ENCODE measurements at regions of chr1 and their contacts with region 1.

Region 1: GRCh38 chr1:58783993-58784757 is at the start of gene JUN:
- DNase-seq: peak; percentile 99
- ATAC-seq: peak; percentile 91
- total RNA-seq, gene JUN: 64.2 TPM

Region 2: GRCh38 chr1:58699011-58699762 is 85.0 kb before region 1 on chr1:
- intact Hi-C with region 1: no loop called
- DNase-seq: no peak
- ATAC-seq: peak; percentile 16

Region 3: GRCh38 chr1:58718435-58718834 is 65.7 kb before region 1 on chr1:
- intact Hi-C with region 1: no loop called
- DNase-seq: no peak
- ATAC-seq: peak; percentile 50

Region 4: GRCh38 chr1:58816072-58816746 is 32.0 kb after region 1 on chr1:
- intact Hi-C with region 1: loop called (anchors 1 kb)
- DNase-seq: peak; percentile 96
- ATAC-seq: peak; percentile 91

Region 5: GRCh38 chr1:58857680-58858673 is 73.8 kb after region 1 on chr1:
- intact Hi-C with region 1: no loop called
- DNase-seq: no peak
- ATAC-seq: no peak

Region 6: DNA sequence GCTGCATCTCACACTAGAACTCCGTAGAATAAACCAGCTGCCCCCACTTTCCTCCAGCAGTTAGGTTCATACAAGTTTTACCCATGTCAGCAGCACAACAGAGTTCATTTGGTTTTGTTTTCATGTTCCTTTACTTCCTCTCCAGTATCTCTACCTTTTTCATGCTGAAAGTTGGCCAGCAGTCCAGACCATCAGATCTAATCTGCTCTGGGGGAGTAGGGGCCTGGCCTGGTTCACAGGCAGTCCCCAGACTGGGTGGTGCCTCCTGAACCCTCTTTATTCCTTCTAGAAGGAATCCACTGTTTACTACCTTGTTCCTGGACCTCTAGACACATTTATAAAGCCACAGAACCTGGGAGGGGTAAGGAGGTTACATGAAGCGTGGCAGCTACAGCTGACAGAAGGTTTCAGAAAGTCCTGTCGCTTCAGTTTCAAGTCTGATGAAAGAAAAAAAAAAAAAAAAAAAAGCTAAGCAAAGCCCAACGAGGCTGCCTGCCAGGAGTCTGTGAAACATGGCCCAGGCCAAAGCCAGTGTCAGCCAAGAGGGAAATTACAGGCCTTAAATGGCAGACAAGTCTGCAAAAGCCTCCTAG is 184.3 kb after region 1 on chr1:
- intact Hi-C with region 1: loop called (anchors 2 kb)
- DNase-seq: peak; percentile 88
- ATAC-seq: peak; percentile 73

Region 7: GRCh38 chr1:59057211-59057694 is 273.1 kb after region 1 on chr1:
- intact Hi-C with region 1: loop called (anchors 2 kb)
- DNase-seq: peak; percentile 93
- ATAC-seq: peak; percentile 93

Region 8: DNA sequence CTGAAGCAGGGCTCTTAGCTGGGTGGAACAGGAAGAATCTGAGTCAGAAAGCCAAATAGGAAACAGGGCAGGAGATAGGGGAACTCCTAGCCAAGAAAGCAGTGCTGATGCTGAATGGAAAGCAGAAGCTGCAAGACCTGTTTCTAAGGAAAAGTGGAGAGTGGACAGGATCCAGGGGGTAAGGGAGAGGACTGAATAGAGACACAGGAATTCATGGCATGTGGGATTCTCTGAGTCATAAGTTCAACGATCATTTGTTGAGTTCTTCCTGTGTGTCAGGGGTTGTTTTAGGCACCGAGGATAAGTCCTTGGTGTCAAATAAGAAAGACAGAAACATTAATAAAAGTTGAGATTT is 358.9 kb after region 1 on chr1:
- intact Hi-C with region 1: loop called (anchors 1 kb)
- DNase-seq: no peak
- ATAC-seq: no peak

Region 9: GRCh38 chr1:59296358-59297256 is 512.4 kb after region 1 on chr1 and contains the start of gene FGGY:
- intact Hi-C with region 1: loop called (anchors 2 kb)
- DNase-seq: peak; percentile 99
- ATAC-seq: peak; percentile 96
- total RNA-seq, gene FGGY: 28.5 TPM

Region 10: GRCh38 chr1:59759156-59759925 is 975.2 kb after region 1 on chr1:
- intact Hi-C with region 1: loop called (anchors 1 kb)
- DNase-seq: peak; percentile 89
- ATAC-seq: peak; percentile 96